GM12878 (cell line): ENCODE measurements at regions of chr12 and their contacts with region 1.

Region 1: DNA sequence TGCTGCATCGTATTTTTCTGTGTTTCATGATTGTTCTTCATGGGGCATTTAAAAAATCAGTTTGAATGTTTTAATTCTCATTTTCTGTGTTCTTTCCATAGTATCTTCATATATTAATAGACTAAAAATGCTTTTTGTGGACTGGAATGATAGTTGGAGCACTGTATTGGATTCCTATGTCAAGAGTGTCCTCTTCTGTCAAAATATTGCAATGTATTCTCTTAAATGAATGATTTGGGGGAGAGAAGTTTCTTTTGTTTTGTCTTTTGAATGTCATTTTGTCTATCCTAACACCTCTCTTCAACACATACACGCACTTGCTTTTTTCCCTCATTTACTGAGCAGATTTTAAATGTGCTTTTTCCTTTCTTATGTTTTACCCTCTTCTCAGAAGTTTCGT is 4.7 kb upstream of the EIF2S3B start:
- DNase-seq: no peak
- ATAC-seq: no peak
- H3K4me3 ChIP-seq: no peak overlapping the region
- H3K27ac ChIP-seq: no peak overlapping the region
- H3K4me1 ChIP-seq: no peaks in the 10 kb centered on the region
- H3K27me3 ChIP-seq: no peaks in the 10 kb centered on the region
- CTCF ChIP-seq: peak in 1 of 3 experiments; percentile 30; a peak in 1 of 6 replicates
- EP300 ChIP-seq: no peak
- POLR2A ChIP-seq: no peak
- RAD21 ChIP-seq: peak; percentile 64

Region 2: DNA sequence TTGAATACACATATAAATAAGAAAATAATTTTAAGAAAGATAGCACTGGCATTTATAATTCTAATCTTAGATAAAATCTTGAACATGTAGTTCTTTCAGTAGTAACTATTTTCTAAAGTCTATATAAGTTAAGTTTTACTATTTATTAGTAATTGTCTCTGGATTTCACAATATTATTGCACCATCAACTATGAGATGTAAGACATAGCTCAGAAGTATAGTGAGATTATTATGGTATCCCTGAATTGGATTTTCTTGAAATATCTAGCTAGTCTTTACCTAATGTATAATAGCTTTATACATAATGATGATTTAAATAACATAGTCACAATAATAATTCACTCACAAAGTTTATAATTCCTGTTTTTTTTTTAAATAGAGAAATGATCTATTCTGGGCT is 523.1 kb before region 1 on chr12:
- CTCF ChIA-PET with region 1: no interaction called
- POLR2A ChIA-PET with region 1: no interaction called
- RAD21 ChIA-PET with region 1: no interaction called
- SMC1A ChIA-PET with region 1: no interaction called
- in situ Hi-C with region 1: no loop called
- intact Hi-C with region 1: no loop called
- DNase-seq: no peak
- ATAC-seq: no peak
- H3K4me3 ChIP-seq: no peak overlapping the region
- H3K27ac ChIP-seq: no peak overlapping the region
- H3K4me1 ChIP-seq: no peaks in the 10 kb centered on the region
- H3K27me3 ChIP-seq: peaks cover 0 to 2% of the 10 kb centered on the region in 2 experiments; a peak in 1 of 4 replicates
- CTCF ChIP-seq: no peak
- EP300 ChIP-seq: no peak
- POLR2A ChIP-seq: no peak
- RAD21 ChIP-seq: no peak

Region 3: GRCh38 chr12:10243818-10244520 is 257.1 kb before region 1 on chr12:
- CTCF ChIA-PET with region 1: no interaction called
- POLR2A ChIA-PET with region 1: no interaction called
- RAD21 ChIA-PET with region 1: no interaction called
- SMC1A ChIA-PET with region 1: no interaction called
- in situ Hi-C with region 1: no loop called
- intact Hi-C with region 1: loop called (anchors 5 kb)
- DNase-seq: peak; percentile 58
- ATAC-seq: peak; percentile 95
- H3K4me3 ChIP-seq: no peak overlapping the region
- H3K27ac ChIP-seq: 0 out of 2 replicates have a peak overlapping the region, but pooled peaks have one; percentile 1
- H3K4me1 ChIP-seq: peaks cover 10% of the 10 kb centered on the region
- H3K27me3 ChIP-seq: no peaks in the 10 kb centered on the region; a peak in 1 of 4 replicates
- CTCF ChIP-seq: no peak
- EP300 ChIP-seq: peak in 1 of 2 experiments; percentile 69; a peak in 2 of 4 replicates
- POLR2A ChIP-seq: no peak
- RAD21 ChIP-seq: peak; percentile 31; the same call in 1 of the 2 replicates

Region 4: GRCh38 chr12:10385166-10385613 is 115.8 kb before region 1 on chr12:
- CTCF ChIA-PET with region 1: no interaction called
- POLR2A ChIA-PET with region 1: no interaction called
- RAD21 ChIA-PET with region 1: no interaction called
- SMC1A ChIA-PET with region 1: no interaction called
- in situ Hi-C with region 1: no loop called
- intact Hi-C with region 1: no loop called
- DNase-seq: no peak
- ATAC-seq: no peak
- H3K4me3 ChIP-seq: no peak overlapping the region
- H3K27ac ChIP-seq: no peak overlapping the region
- H3K4me1 ChIP-seq: no peaks in the 10 kb centered on the region
- H3K27me3 ChIP-seq: no peaks in the 10 kb centered on the region
- CTCF ChIP-seq: no peak
- EP300 ChIP-seq: no peak
- POLR2A ChIP-seq: no peak
- RAD21 ChIP-seq: no peak

Region 5: GRCh38 chr12:10562306-10562933 is 61.4 kb after region 1 on chr12:
- CTCF ChIA-PET with region 1: no interaction called
- POLR2A ChIA-PET with region 1: no interaction called
- RAD21 ChIA-PET with region 1: no interaction called
- SMC1A ChIA-PET with region 1: interaction called, 3 read pairs
- in situ Hi-C with region 1: no loop called
- intact Hi-C with region 1: loop called (anchors 5 kb)
- DNase-seq: no peak
- ATAC-seq: peak; percentile 39; the same call in 2 of the 3 replicates
- H3K4me3 ChIP-seq: no peak overlapping the region
- H3K27ac ChIP-seq: no peak overlapping the region
- H3K4me1 ChIP-seq: peaks cover 4% of the 10 kb centered on the region
- H3K27me3 ChIP-seq: no peaks in the 10 kb centered on the region
- CTCF ChIP-seq: peak; percentile 45 to 69 (median 56); a peak in 5 of 6 replicates
- EP300 ChIP-seq: no peak
- POLR2A ChIP-seq: no peak
- RAD21 ChIP-seq: peak; percentile 96

Region 6: DNA sequence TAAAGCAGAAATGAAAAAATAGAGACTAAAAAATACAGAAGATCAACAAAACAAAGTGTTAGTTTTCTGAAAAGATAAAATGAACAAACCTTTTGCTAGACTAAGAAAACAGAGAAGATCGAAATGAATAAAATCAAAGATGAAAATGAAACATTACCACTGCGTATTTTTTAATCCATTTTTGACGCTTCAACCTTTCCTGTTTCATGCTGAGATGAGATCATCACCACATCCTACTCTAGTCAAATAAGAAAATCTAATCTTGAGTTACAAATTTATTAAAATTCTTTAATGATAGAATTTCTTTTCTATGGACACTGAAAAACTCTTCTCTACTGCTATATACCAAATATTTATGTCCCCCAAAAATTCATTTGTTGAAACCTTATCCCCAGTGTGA is 81.7 kb after region 1 on chr12:
- CTCF ChIA-PET with region 1: no interaction called
- POLR2A ChIA-PET with region 1: no interaction called
- RAD21 ChIA-PET with region 1: no interaction called
- SMC1A ChIA-PET with region 1: no interaction called
- in situ Hi-C with region 1: no loop called
- intact Hi-C with region 1: no loop called
- DNase-seq: no peak
- ATAC-seq: no peak
- H3K4me3 ChIP-seq: no peak overlapping the region
- H3K27ac ChIP-seq: no peak overlapping the region
- H3K4me1 ChIP-seq: no peaks in the 10 kb centered on the region
- H3K27me3 ChIP-seq: no peaks in the 10 kb centered on the region
- CTCF ChIP-seq: no peak
- EP300 ChIP-seq: no peak
- POLR2A ChIP-seq: no peak
- RAD21 ChIP-seq: no peak

Region 7: GRCh38 chr12:10613349-10614055 is 112.5 kb after region 1 on chr12 and contains the start of gene MAGOHB:
- CTCF ChIA-PET with region 1: no interaction called
- POLR2A ChIA-PET with region 1: no interaction called
- RAD21 ChIA-PET with region 1: no interaction called
- SMC1A ChIA-PET with region 1: no interaction called
- in situ Hi-C with region 1: no loop called
- intact Hi-C with region 1: no loop called
- DNase-seq: peak; percentile 90
- ATAC-seq: peak; percentile 96
- H3K4me3 ChIP-seq: peak within 1 kb of the TSS; percentile 71
- H3K27ac ChIP-seq: peak within 1 kb of the TSS; percentile 88
- H3K4me1 ChIP-seq: no peaks in the 10 kb centered on the region
- H3K27me3 ChIP-seq: no peaks in the 10 kb centered on the region
- CTCF ChIP-seq: no peak
- EP300 ChIP-seq: peak; percentile 43 to 67; a peak in 2 of 4 replicates
- POLR2A ChIP-seq: peak; percentile 94
- RAD21 ChIP-seq: no peak
- polyA plus RNA-seq, gene MAGOHB: 151 to 161 TPM